Lower leg skin (tissue), 4 donors: ENCODE measurements at regions of chr13 and their contacts with region 1.

Region 1: GRCh38 chr13:52665325-52665724 is 12.7 kb downstream of the SUGT1 start:
- DNase-seq: no peak
- H3K4me3 ChIP-seq: no peak overlapping the region
- CTCF ChIP-seq: no peak
- POLR2A ChIP-seq: no peak

Region 2: DNA sequence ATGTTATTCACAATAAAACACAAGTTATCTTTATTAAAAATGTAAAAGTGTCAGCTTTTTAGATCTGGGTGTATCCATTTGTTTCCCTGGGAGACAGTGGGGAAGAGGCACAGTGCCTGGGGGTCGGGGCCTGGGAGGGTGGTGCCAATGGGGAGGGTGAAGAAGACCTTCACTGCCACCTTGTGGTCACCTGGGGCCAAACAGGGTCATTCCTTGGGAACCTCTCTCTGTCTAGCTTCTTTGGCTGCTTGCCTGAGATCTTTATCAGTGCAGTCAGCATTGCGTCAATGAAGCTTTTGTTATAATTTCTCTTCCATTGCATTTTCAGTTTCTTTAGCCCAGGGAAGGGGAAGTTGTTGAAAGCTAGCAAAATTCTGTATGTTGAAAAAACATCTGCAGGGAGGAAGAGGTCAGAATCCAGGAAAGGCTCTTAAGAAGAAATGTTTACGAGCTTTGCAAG is 144.0 kb after region 1 on chr13:
- intact Hi-C with region 1: loop called (anchors 5 kb)
- DNase-seq: no peak
- H3K4me3 ChIP-seq: no peak overlapping the region
- CTCF ChIP-seq: no peak
- POLR2A ChIP-seq: no peak